B cell (primary cell): ENCODE measurements at regions of chr13 and their contacts with region 1.

Region 1: DNA sequence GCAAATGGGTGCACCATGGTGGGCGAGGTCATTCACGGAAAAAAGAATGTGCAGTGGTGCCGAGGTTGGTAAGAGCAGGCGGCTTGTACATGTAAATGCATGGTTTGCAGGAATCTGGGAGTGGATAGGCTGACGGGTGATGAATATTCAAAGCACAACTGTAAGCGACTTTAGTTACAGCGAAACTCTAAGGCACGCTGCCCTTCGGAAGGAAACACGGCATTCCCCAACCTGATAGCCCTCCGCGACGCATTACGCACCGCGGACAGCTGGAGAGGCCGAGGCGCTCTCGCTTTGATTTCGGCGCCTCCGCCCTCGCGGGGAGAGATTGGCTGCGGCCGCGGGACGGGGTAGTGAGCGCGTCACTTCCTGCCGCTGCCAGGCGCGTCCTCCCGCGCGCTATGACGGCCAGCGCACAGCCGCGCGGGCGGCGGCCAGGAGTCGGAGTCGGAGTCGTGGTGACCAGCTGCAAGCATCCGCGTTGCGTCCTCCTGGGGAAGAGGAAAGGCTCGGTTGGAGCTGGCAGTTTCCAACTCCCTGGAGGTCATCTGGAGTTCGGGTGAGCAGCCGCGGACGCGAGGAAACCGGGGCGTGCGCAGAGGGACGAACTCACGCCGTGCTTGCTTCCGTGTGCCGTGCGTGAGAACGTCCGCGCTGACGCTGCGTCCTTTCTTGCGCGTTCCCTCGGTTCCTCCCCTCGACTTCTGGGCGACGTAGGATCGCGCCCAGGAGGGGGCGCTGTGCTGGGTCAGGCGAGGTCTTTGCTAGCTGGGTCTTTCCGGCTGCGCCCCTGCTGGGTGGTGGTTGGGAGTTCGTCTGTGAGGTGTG is at the start of gene NUDT15:
- DNase-seq: peak; percentile 98
- ATAC-seq: peak; percentile 94
- H3K4me3 ChIP-seq: peak within 1 kb of the TSS; percentile 84 to 94 (median 92)
- H3K4me3 Mint-ChIP-seq: peak within 1 kb of the TSS; percentile 96
- H3K27ac ChIP-seq: peak within 1 kb of the TSS; percentile 96 to 98
- H3K27ac Mint-ChIP-seq: peak within 1 kb of the TSS; percentile 96
- H3K4me1 ChIP-seq: peaks cover 13 to 18% of the 10 kb centered on the region in 2 donors
- H3K4me1 Mint-ChIP-seq: peaks cover 22% of the 10 kb centered on the region
- H3K27me3 ChIP-seq: no peaks in the 10 kb centered on the region
- H3K27me3 Mint-ChIP-seq: no peaks in the 10 kb centered on the region
- CTCF ChIP-seq: peak; percentile 97
- total RNA-seq, gene NUDT15: 4.2 TPM in 2 replicates

Region 2: GRCh38 chr13:48050550-48050949 is 13.0 kb after region 1 on chr13:
- CTCF ChIA-PET with region 1: interaction called, 18 read pairs
- POLR2A ChIA-PET with region 1: interaction called, 3 read pairs
- intact Hi-C with region 1: no loop called
- DNase-seq: no peak
- ATAC-seq: no peak
- H3K4me3 ChIP-seq: no peak overlapping the region
- H3K4me3 Mint-ChIP-seq: no peak overlapping the region
- H3K27ac ChIP-seq: no peak overlapping the region
- H3K27ac Mint-ChIP-seq: no peak overlapping the region
- H3K4me1 ChIP-seq: no peaks in the 10 kb centered on the region
- H3K4me1 Mint-ChIP-seq: no peaks in the 10 kb centered on the region
- H3K27me3 ChIP-seq: no peaks in the 10 kb centered on the region
- H3K27me3 Mint-ChIP-seq: no peaks in the 10 kb centered on the region
- CTCF ChIP-seq: no peak

Region 3: GRCh38 chr13:48094781-48095502 is 57.4 kb after region 1 on chr13 and contains the start of gene MED4:
- CTCF ChIA-PET with region 1: interaction called, 19 read pairs
- POLR2A ChIA-PET with region 1: interaction called, 6 read pairs
- intact Hi-C with region 1: loop called (anchors 1 kb)
- DNase-seq: peak; percentile 97
- ATAC-seq: peak; percentile 99
- H3K4me3 ChIP-seq: peak within 1 kb of the TSS; percentile 86 to 99 (median 92)
- H3K4me3 Mint-ChIP-seq: peak within 1 kb of the TSS; percentile 94
- H3K27ac ChIP-seq: peak within 1 kb of the TSS; percentile 83 to 89
- H3K27ac Mint-ChIP-seq: peak within 1 kb of the TSS; percentile 95
- H3K4me1 ChIP-seq: peaks cover 16 to 17% of the 10 kb centered on the region in 2 donors
- H3K4me1 Mint-ChIP-seq: peaks cover 35% of the 10 kb centered on the region
- H3K27me3 ChIP-seq: no peaks in the 10 kb centered on the region
- H3K27me3 Mint-ChIP-seq: peaks cover 10% of the 10 kb centered on the region
- CTCF ChIP-seq: peak; percentile 99
- total RNA-seq, gene MED4: 49.7 and 50.1 TPM in 2 replicates

Region 4: GRCh38 chr13:48303359-48304142 is 266.0 kb after region 1 on chr13 and contains the start of gene RB1:
- CTCF ChIA-PET with region 1: no interaction called
- POLR2A ChIA-PET with region 1: no interaction called
- intact Hi-C with region 1: loop called (anchors 1 kb)
- DNase-seq: peak; percentile 97
- ATAC-seq: peak; percentile 69
- H3K4me3 ChIP-seq: peak within 1 kb of the TSS; percentile 70 to 98 (median 89)
- H3K4me3 Mint-ChIP-seq: peak within 1 kb of the TSS; percentile 99
- H3K27ac ChIP-seq: peak within 1 kb of the TSS; percentile 99 to 100
- H3K27ac Mint-ChIP-seq: peak within 1 kb of the TSS; percentile 100
- H3K4me1 ChIP-seq: peaks cover 22 to 26% of the 10 kb centered on the region in 2 donors
- H3K4me1 Mint-ChIP-seq: peaks cover 34% of the 10 kb centered on the region
- H3K27me3 ChIP-seq: no peaks in the 10 kb centered on the region
- H3K27me3 Mint-ChIP-seq: no peaks in the 10 kb centered on the region
- CTCF ChIP-seq: no peak
- total RNA-seq, gene RB1: 70.4 and 74.8 TPM in 2 replicates

Region 5: GRCh38 chr13:48580185-48580803 is 542.7 kb after region 1 on chr13:
- CTCF ChIA-PET with region 1: interaction called, 13 read pairs
- POLR2A ChIA-PET with region 1: no interaction called
- intact Hi-C with region 1: loop called (anchors 1 kb)
- DNase-seq: peak; percentile 78
- ATAC-seq: peak; percentile 47
- H3K4me3 ChIP-seq: no peak overlapping the region
- H3K4me3 Mint-ChIP-seq: no peak overlapping the region
- H3K27ac ChIP-seq: no peak overlapping the region
- H3K27ac Mint-ChIP-seq: peak overlapping the region; percentile 41
- H3K4me1 ChIP-seq: peaks cover 18 to 19% of the 10 kb centered on the region in 2 donors
- H3K4me1 Mint-ChIP-seq: peaks cover 17% of the 10 kb centered on the region
- H3K27me3 ChIP-seq: peaks cover 0 to 84% (median 71%) of the 10 kb centered on the region in 4 experiments
- H3K27me3 Mint-ChIP-seq: peaks cover 72% of the 10 kb centered on the region
- CTCF ChIP-seq: peak; percentile 85

Region 6: GRCh38 chr13:48975856-48976575 is 938.5 kb after region 1 on chr13 and contains the start of gene FNDC3A:
- CTCF ChIA-PET with region 1: no interaction called
- POLR2A ChIA-PET with region 1: no interaction called
- intact Hi-C with region 1: loop called (anchors 5 kb)
- DNase-seq: peak; percentile 93
- ATAC-seq: peak; percentile 78
- H3K4me3 ChIP-seq: peak within 1 kb of the TSS; percentile 85 to 95 (median 88)
- H3K4me3 Mint-ChIP-seq: peak within 1 kb of the TSS; percentile 98
- H3K27ac ChIP-seq: peak within 1 kb of the TSS; percentile 95 to 96
- H3K27ac Mint-ChIP-seq: peak within 1 kb of the TSS; percentile 100
- H3K4me1 ChIP-seq: peaks cover 40 to 46% of the 10 kb centered on the region in 2 donors
- H3K4me1 Mint-ChIP-seq: peaks cover 45% of the 10 kb centered on the region
- H3K27me3 ChIP-seq: no peaks in the 10 kb centered on the region
- H3K27me3 Mint-ChIP-seq: no peaks in the 10 kb centered on the region
- CTCF ChIP-seq: no peak
- total RNA-seq, gene FNDC3A: 37.1 and 38.6 TPM in 2 replicates

Region 7: GRCh38 chr13:49792550-49793324 is 1755.2 kb after region 1 on chr13 and contains the start of gene KPNA3:
- CTCF ChIA-PET with region 1: no interaction called
- POLR2A ChIA-PET with region 1: no interaction called
- intact Hi-C with region 1: loop called (anchors 2 kb)
- DNase-seq: peak; percentile 97
- ATAC-seq: peak; percentile 87
- H3K4me3 ChIP-seq: peak within 1 kb of the TSS; percentile 79 to 88 (median 80)
- H3K4me3 Mint-ChIP-seq: peak within 1 kb of the TSS; percentile 97
- H3K27ac ChIP-seq: peak within 1 kb of the TSS; percentile 85 to 91
- H3K27ac Mint-ChIP-seq: peak within 1 kb of the TSS; percentile 99
- H3K4me1 ChIP-seq: peaks cover 20 to 21% of the 10 kb centered on the region in 2 donors
- H3K4me1 Mint-ChIP-seq: peaks cover 34% of the 10 kb centered on the region
- H3K27me3 ChIP-seq: no peaks in the 10 kb centered on the region
- H3K27me3 Mint-ChIP-seq: peaks cover 4% of the 10 kb centered on the region
- CTCF ChIP-seq: no peak
- total RNA-seq, gene KPNA3: 19.0 and 19.7 TPM in 2 replicates